CD4-positive, alpha-beta T cell (primary cell): ENCODE measurements at regions of chr6 and their contacts with region 1.

Region 1: DNA sequence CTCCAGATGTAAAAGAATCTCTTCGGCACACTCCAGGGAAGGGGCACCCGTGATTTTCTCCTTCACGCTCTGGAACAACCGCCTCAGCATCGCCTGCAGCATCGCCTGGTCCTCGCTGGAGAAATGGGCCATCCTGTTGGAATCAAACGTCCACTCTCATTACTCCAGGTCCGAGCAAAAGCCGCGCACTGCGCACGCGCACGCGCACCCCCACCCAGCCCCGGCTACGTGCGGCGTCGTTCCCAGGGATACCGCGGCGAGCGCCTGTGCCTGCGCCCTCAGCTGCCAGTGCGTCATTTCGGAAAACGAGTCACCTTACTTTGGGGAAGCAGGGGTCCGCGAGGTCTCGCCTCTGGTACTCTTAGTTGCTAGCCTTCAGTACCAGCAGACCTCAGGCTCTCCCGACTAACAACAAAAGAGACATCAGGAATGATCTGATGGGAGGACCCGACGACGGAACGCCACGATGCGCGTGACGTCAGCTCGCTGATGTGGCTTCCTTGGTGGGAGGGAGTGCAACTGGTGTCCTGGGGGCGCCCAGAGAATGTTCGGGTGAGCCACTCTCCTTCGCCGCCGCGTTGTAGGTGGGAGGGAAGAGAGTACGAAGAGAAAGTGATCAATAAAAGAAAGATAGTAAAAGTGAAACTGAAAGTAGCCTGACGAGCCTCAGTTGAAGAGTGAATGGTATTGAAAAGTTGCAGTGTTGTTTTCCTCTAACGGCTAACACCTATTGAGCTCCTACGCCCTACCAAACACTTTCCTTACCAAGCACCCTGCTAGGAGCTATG is at the start of gene TBC1D32:
- DNase-seq: peak; percentile 73 to 92 (median 82)
- ATAC-seq: peak; percentile 84
- H3K4me3 ChIP-seq: peak within 1 kb of the TSS; percentile 83
- H3K4me3 Mint-ChIP-seq: peak within 1 kb of the TSS; percentile 97
- H3K27ac ChIP-seq: peak within 1 kb of the TSS; percentile 94 to 99
- H3K27ac Mint-ChIP-seq: peak within 1 kb of the TSS; percentile 98
- H3K4me1 ChIP-seq: peaks cover 15% of the 10 kb centered on the region
- H3K4me1 Mint-ChIP-seq: peaks cover 44% of the 10 kb centered on the region
- H3K27me3 ChIP-seq: no peaks in the 10 kb centered on the region
- H3K27me3 Mint-ChIP-seq: no peaks in the 10 kb centered on the region
- CTCF ChIP-seq: no peak
- total RNA-seq, gene TBC1D32: 9.4 to 9.8 TPM

Region 2: DNA sequence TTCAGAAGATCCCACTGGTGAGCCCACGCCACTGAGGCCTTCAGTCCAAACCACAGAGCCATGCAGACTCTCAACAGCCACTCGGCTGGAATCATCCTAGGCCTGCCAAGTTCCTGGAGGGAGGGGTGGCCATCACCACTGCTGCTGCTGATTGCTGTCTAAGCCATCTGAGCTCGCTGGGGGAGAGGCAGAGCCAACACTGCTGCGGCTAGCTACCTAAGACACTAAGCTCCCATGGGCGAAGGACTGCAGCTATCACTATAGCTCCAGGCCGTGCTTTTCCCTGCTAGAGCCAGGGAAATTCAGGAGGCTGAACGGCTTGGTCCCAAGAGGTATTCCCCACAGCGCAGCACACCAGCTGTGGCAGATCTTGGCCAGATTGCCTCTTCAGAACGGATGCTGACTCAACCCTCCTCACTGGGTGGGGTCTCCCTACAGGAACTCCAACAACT is 73.8 kb before region 1 on chr6:
- CTCF ChIA-PET with region 1: no interaction called
- POLR2A ChIA-PET with region 1: no interaction called
- intact Hi-C with region 1: no loop called
- DNase-seq: no peak
- ATAC-seq: no peak
- H3K4me3 ChIP-seq: no peak overlapping the region
- H3K4me3 Mint-ChIP-seq: no peak overlapping the region
- H3K27ac ChIP-seq: no peak overlapping the region
- H3K27ac Mint-ChIP-seq: no peak overlapping the region
- H3K4me1 ChIP-seq: no peaks in the 10 kb centered on the region
- H3K4me1 Mint-ChIP-seq: no peaks in the 10 kb centered on the region
- H3K27me3 ChIP-seq: no peaks in the 10 kb centered on the region
- H3K27me3 Mint-ChIP-seq: no peaks in the 10 kb centered on the region
- CTCF ChIP-seq: no peak

Region 3: GRCh38 chr6:121344539-121344938 is 10.0 kb after region 1 on chr6:
- CTCF ChIA-PET with region 1: no interaction called
- POLR2A ChIA-PET with region 1: interaction called, 10 read pairs
- intact Hi-C with region 1: no loop called
- DNase-seq: no peak
- ATAC-seq: no peak
- H3K4me3 ChIP-seq: no peak overlapping the region
- H3K4me3 Mint-ChIP-seq: no peak overlapping the region
- H3K27ac ChIP-seq: no peak overlapping the region
- H3K27ac Mint-ChIP-seq: no peak overlapping the region
- H3K4me1 ChIP-seq: no peaks in the 10 kb centered on the region
- H3K4me1 Mint-ChIP-seq: no peaks in the 10 kb centered on the region
- H3K27me3 ChIP-seq: peaks cover 0 to 5% of the 10 kb centered on the region in 2 experiments
- H3K27me3 Mint-ChIP-seq: peaks cover 21% of the 10 kb centered on the region
- CTCF ChIP-seq: no peak

Region 4: DNA sequence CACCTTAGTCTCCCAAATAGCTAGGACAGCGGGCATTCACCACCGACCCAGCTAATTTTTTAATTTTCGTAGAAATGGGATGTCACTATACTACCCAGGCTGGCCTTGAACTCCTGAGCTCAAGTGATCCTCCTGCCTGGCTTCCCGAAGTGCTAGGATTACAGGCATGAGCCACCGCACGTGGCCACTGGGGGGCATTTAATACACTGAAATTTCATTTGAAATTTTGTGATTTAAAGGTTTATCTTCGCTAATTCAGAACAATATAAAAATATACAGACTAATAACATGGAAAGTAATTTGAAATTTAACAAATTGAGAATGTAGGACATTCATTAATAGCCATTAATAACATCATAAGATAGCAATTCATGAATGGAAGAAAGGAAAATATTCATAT is 20.3 kb after region 1 on chr6:
- CTCF ChIA-PET with region 1: no interaction called
- POLR2A ChIA-PET with region 1: no interaction called
- intact Hi-C with region 1: no loop called
- DNase-seq: no peak
- ATAC-seq: no peak
- H3K4me3 ChIP-seq: no peak overlapping the region
- H3K4me3 Mint-ChIP-seq: no peak overlapping the region
- H3K27ac ChIP-seq: no peak overlapping the region
- H3K27ac Mint-ChIP-seq: no peak overlapping the region
- H3K4me1 ChIP-seq: no peaks in the 10 kb centered on the region
- H3K4me1 Mint-ChIP-seq: no peaks in the 10 kb centered on the region
- H3K27me3 ChIP-seq: peaks cover 0 to 11% of the 10 kb centered on the region in 2 experiments
- H3K27me3 Mint-ChIP-seq: peaks cover 38% of the 10 kb centered on the region
- CTCF ChIP-seq: peak; percentile 33

Region 5: GRCh38 chr6:121460170-121460569 is 125.7 kb after region 1 on chr6:
- CTCF ChIA-PET with region 1: no interaction called
- POLR2A ChIA-PET with region 1: no interaction called
- intact Hi-C with region 1: no loop called
- DNase-seq: no peak
- ATAC-seq: no peak
- H3K4me3 ChIP-seq: no peak overlapping the region
- H3K4me3 Mint-ChIP-seq: no peak overlapping the region
- H3K27ac ChIP-seq: no peak overlapping the region
- H3K27ac Mint-ChIP-seq: no peak overlapping the region
- H3K4me1 ChIP-seq: no peaks in the 10 kb centered on the region
- H3K4me1 Mint-ChIP-seq: no peaks in the 10 kb centered on the region
- H3K27me3 ChIP-seq: no peaks in the 10 kb centered on the region
- H3K27me3 Mint-ChIP-seq: no peaks in the 10 kb centered on the region
- CTCF ChIP-seq: no peak

Region 6: GRCh38 chr6:121726596-121726995 is 392.1 kb after region 1 on chr6:
- CTCF ChIA-PET with region 1: no interaction called
- POLR2A ChIA-PET with region 1: no interaction called
- intact Hi-C with region 1: no loop called
- DNase-seq: no peak
- ATAC-seq: no peak
- H3K4me3 ChIP-seq: no peak overlapping the region
- H3K4me3 Mint-ChIP-seq: no peak overlapping the region
- H3K27ac ChIP-seq: no peak overlapping the region
- H3K27ac Mint-ChIP-seq: no peak overlapping the region
- H3K4me1 ChIP-seq: no peaks in the 10 kb centered on the region
- H3K4me1 Mint-ChIP-seq: no peaks in the 10 kb centered on the region
- H3K27me3 ChIP-seq: no peaks in the 10 kb centered on the region
- H3K27me3 Mint-ChIP-seq: no peaks in the 10 kb centered on the region
- CTCF ChIP-seq: no peak

Region 7: DNA sequence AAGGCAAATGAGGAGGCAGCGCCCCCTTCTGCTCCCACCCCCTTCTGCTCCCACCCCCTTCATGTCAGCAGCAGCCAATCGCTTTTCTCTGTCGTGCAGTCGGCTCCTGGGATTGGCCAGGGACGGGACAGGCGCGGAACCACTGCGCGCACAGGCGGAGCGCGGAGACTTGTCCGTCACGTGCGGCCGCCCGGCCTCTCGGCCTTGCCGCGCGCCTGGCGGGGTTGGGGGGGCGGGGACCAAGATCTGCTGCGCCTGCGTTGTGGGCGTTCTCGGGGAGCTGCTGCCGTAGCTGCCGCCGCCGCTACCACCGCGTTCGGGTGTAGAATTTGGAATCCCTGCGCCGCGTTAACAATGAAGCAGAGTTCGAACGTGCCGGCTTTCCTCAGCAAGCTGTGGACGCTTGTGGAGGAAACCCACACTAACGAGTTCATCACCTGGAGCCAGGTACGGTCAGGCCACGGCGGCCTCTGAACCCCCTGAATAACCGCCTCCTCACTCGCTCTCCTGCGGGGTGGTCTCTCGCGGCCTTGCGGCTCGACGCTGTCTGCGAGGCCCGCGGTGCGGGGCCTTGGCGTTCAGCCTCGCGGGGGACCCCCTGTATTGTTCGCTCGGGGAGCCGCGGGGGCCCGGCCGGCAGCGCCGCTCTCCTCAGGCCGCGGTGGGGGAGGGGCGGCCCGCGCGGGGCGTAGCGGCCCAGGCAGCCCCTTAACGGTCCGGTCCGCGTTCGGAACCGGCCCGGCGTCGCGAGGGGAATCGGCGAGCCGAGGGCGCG is 1065.1 kb after region 1 on chr6 and contains the start of gene HSF2:
- CTCF ChIA-PET with region 1: no interaction called
- POLR2A ChIA-PET with region 1: no interaction called
- intact Hi-C with region 1: loop called in 1 of 2 experiments (anchors 10 kb)
- DNase-seq: peak; percentile 86 to 98 (median 91)
- ATAC-seq: peak; percentile 94
- H3K4me3 ChIP-seq: peak within 1 kb of the TSS; percentile 94
- H3K4me3 Mint-ChIP-seq: peak within 1 kb of the TSS; percentile 100
- H3K27ac ChIP-seq: peak within 1 kb of the TSS; percentile 70 to 89
- H3K27ac Mint-ChIP-seq: peak within 1 kb of the TSS; percentile 86
- H3K4me1 ChIP-seq: peaks cover 12% of the 10 kb centered on the region
- H3K4me1 Mint-ChIP-seq: peaks cover 42% of the 10 kb centered on the region
- H3K27me3 ChIP-seq: no peaks in the 10 kb centered on the region
- H3K27me3 Mint-ChIP-seq: no peaks in the 10 kb centered on the region
- CTCF ChIP-seq: peak; percentile 24
- total RNA-seq, gene HSF2: 41.8 to 47.6 TPM